ENCODE measurements at regions of chr6 and their contacts with region 1.

Region 1: GRCh38 chr6:11732036-11732631 is 46.5 kb downstream of the ADTRP start:
- DNase-seq: peak; percentile 67 to 94
- H3K4me3 ChIP-seq: peak overlapping the region in 1 of 2 donors; percentile 10
- H3K27ac ChIP-seq: peak overlapping the region; percentile 86 to 93
- H3K4me1 ChIP-seq: peaks cover 0 to 18% of the 10 kb centered on the region in 2 donors
- H3K27me3 ChIP-seq: no peaks in the 10 kb centered on the region
- CTCF ChIP-seq: no peak

Region 2: DNA sequence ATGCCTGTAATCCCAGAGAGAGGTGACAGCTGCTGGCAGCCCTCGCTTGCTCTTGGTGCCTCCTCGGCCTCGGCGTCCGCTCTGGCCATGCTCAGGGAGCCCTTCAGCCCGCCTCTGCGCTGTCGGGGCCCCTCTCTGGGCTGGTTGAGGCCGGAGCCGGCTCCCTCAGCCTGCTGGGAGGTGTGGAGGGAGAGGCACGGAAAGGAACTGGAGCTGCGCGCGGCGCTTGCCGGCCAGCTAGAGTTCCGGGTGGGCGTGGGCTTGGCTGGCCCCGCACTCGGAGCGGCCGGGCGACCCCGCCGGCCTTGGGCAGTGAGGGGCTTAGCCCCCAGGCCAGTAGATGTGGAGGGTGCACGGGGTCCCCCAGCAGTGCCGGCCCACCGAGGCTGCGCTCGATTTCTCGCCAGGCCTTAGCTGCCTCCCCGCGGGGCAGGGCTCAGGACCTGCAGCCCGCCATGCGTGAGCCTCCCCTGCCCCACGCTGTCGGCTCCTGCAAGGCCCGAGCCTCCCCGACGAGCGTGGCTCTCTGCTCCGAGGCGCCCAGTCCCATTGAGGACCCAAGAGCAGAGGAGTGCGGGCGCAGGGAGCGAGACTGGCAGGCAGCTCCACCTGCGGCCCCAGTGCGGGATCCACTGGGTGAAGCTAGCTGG is 1072.3 kb before region 1 on chr6:
- intact Hi-C with region 1: no loop called
- DNase-seq: no peak
- H3K4me3 ChIP-seq: peak overlapping the region in 1 of 2 donors; percentile 53
- H3K27ac ChIP-seq: no peak overlapping the region
- H3K4me1 ChIP-seq: no peaks in the 10 kb centered on the region
- H3K27me3 ChIP-seq: no peaks in the 10 kb centered on the region
- CTCF ChIP-seq: no peak

Region 3: DNA sequence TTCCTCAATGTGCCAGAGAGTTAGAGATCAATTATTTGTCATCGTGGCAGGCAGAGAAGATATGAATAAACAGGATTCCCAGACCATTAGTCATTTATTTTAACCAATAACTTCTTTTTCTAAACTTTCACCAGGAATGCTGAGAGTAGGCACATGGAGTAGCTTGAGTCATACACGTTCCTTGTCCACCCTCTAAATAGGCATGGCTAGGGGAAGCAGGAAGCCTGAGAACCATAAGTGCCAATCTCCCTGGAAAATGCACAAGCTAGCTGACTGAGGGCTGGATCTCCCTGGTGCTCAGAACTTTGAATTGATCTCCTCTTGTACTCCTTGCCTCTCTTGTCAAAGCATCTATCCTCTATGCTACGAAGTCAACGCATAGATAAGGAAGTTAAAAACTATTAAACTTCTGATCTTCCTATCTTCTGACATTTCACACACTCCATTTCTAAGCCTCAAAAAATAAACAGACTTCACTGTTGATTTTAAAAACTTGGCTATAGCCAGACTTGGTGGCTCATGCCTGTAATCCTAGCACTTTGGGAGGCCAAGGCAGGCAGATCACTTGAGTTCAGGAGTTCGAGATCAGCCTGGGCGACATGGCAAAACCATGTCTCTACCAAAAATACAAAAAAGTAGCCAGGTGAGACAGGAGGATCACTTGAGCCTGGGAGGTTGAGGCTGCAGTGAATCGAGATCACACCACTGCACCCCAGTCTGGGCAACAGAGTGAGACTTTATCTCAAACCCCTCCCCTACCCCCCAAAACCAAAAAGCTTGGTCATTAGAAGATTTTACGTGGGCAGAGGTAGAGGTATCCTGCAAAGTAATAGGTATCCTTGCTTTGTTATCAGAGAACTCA is 34.7 kb after region 1 on chr6:
- intact Hi-C with region 1: loop called (anchors 2 kb)
- DNase-seq: peak in 1 of 2 donors; percentile 83
- H3K4me3 ChIP-seq: no peak overlapping the region
- H3K27ac ChIP-seq: peak overlapping the region; percentile 81 to 84
- H3K4me1 ChIP-seq: peaks cover 22 to 79% of the 10 kb centered on the region in 2 donors
- H3K27me3 ChIP-seq: no peaks in the 10 kb centered on the region
- CTCF ChIP-seq: no peak